ENCODE measurements at regions of chr3 and their contacts with region 1.

Region 1: DNA sequence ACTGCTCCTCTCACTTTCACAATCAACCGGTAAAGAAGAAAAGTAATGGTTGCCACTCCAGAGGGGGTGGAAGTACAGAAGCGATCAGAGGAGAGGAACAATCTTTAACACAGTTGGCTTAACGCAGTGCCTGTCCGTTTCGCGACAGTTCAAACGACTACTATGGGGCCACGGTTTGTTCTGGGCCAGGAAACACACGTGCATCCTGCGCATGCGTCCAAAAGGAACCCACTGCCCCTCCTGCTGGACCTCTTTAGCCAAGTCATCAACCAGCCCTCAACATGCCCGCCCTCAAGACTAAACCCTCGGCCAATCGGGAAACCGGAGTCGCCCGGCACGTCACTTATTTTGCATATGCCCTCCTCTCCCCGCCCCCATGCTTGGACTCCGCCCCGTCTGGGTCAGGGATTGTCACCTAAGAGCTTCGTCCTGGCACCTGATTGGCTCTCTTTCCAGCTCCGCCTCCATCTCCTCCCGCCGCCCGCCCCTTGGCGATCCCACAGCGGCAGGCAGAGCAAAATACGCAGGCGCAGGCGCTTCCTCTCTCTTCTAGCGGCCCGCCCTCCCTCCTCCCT is 345 bp upstream of the CDV3 start:
- DNase-seq: peak; percentile 100
- ATAC-seq: peak; percentile 89 to 91
- H3K4me3 ChIP-seq: peak overlapping the region; percentile 52 to 82 (median 63)
- H3K27ac ChIP-seq: peak overlapping the region; percentile 96 to 99 (median 98)
- H3K4me1 ChIP-seq: peaks cover 37% of the 10 kb centered on the region in 2 donors
- H3K27me3 ChIP-seq: no peaks in the 10 kb centered on the region
- CTCF ChIP-seq: no peak
- POLR2A ChIP-seq: peak in 1 of 2 donors; percentile 1

Region 2: DNA sequence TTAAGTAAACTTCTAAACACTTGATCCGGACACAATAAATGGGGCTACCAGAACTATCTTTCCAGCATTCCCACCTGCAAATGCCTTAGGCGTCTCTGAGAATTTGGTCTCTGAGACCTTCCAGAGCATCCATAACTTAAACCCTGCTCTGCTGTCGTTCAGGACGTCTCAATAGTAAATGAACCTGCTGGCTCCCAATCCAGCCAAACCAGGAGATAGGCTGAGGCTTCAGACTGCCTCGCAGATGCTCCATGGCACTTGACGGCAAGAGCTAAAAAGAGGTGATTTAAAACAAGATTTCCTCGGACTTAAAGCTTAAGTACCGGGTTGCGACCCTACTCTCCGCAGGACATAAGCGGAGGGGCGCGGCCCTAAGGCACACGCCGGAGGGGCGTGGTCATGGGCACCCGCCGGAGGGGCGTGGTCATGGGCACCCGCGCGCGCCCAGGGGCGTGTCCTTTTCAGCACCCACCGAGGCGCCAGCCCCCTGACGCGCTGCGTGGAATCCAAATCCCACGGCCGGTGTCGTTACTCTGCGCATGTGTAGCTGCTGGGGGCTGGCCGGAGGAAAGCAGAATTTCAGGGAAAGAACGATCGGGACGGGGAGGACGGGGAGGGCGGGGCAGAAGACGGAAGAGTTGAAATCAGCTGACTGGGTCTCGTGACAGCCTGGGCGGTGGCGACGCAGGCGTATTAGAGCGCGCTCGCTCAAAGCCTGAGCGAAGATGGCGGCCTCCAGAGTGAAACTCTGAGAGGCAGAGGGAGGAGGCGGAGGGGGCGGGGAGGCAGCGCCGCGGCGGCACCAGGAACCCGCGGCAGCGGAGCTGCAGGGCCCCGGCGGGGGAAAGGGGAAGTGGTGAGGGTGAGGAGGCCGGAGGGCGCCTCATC is 1156.1 kb before region 1 on chr3 and contains the start of gene DNAJC13:
- in situ Hi-C with region 1: no loop called
- intact Hi-C with region 1: loop called (anchors 5 kb)
- DNase-seq: peak; percentile 82 to 87
- ATAC-seq: peak; percentile 99
- H3K4me3 ChIP-seq: peak within 1 kb of the TSS; percentile 94 to 100 (median 98)
- H3K27ac ChIP-seq: peak within 1 kb of the TSS; percentile 88 to 95 (median 92)
- H3K4me1 ChIP-seq: peaks cover 16 to 21% of the 10 kb centered on the region in 2 donors
- H3K27me3 ChIP-seq: no peaks in the 10 kb centered on the region
- CTCF ChIP-seq: no peak
- POLR2A ChIP-seq: peak; percentile 53 to 61
- total RNA-seq, gene DNAJC13: 21.9 to 35.2 (median 26.5) TPM

Region 3: GRCh38 chr3:133040696-133041523 is 532.2 kb before region 1 on chr3:
- in situ Hi-C with region 1: no loop called
- intact Hi-C with region 1: loop called (anchors 2 kb)
- DNase-seq: peak; percentile 52 to 71
- ATAC-seq: peak; percentile 71 to 77
- H3K4me3 ChIP-seq: peak overlapping the region in 3 of 4 donors; percentile 9 to 26 (median 19)
- H3K27ac ChIP-seq: peak overlapping the region; percentile 50 to 68 (median 55)
- H3K4me1 ChIP-seq: peaks cover 10 to 27% of the 10 kb centered on the region in 2 donors
- H3K27me3 ChIP-seq: no peaks in the 10 kb centered on the region
- CTCF ChIP-seq: peak; percentile 59 to 82 (median 70)
- POLR2A ChIP-seq: no peak

Region 4: DNA sequence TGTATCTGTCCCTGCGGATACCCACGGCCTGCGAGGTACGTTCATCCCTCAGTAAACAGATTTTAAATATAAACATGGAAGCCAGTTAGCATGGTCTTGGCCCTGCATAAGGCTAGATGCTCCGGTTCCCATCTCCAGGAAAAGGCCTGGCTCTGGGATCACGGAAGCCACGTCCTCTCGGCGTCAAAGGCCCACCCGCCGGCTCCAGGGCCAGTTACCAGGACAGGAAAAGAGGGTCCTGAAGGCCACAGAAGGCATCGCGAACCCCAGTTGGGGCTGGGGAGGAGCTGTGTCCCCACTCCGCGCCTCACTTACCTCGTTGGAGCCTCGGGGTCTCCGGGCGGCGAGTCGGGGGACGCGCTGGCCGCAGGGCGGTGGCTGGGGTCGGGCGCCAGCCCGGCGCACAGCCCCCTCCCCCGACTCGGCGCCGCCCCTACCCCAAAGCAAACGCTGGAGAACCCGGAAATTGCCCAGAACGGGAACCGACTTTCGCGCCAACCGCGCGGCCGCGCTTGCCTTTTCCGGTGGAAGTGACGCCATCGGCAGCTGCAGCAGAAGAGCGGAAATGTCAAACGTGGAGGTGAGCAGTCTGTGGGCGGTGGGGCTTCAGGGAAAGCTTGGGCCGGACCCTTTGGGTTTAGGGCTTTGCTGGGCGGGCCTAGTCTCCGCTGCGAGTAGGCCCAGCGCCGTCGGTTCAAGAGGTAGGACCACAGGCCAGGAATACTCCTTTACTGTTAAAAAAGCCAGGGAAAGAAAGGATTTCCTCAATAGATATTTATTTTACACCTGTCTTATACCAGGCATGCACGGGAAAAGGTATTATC is 88.5 kb after region 1 on chr3 and contains the start of gene TOPBP1:
- in situ Hi-C with region 1: no loop called
- intact Hi-C with region 1: loop called (anchors 5 kb)
- DNase-seq: peak; percentile 50 to 52
- ATAC-seq: peak; percentile 81 to 88
- H3K4me3 ChIP-seq: peak within 1 kb of the TSS; percentile 73 to 84 (median 80)
- H3K27ac ChIP-seq: peak within 1 kb of the TSS; percentile 70 to 78 (median 74)
- H3K4me1 ChIP-seq: peaks cover 11 to 22% of the 10 kb centered on the region in 2 donors
- H3K27me3 ChIP-seq: no peaks in the 10 kb centered on the region
- CTCF ChIP-seq: no peak
- POLR2A ChIP-seq: no peak
- total RNA-seq, gene TOPBP1: 11.8 to 21.1 (median 16.9) TPM

Region 5: GRCh38 chr3:134250717-134251220 is 677.6 kb after region 1 on chr3 and contains the start of gene RYK:
- in situ Hi-C with region 1: no loop called
- intact Hi-C with region 1: loop called (anchors 10 kb)
- DNase-seq: peak; percentile 55 to 75
- ATAC-seq: peak; percentile 91 to 95
- H3K4me3 ChIP-seq: peak within 1 kb of the TSS; percentile 73 to 99 (median 86)
- H3K27ac ChIP-seq: peak within 1 kb of the TSS; percentile 83 to 96 (median 95)
- H3K4me1 ChIP-seq: peaks cover 10 to 12% of the 10 kb centered on the region in 2 donors
- H3K27me3 ChIP-seq: no peaks in the 10 kb centered on the region
- CTCF ChIP-seq: no peak
- POLR2A ChIP-seq: peak; percentile 65 to 79
- total RNA-seq, gene RYK: 25.8 to 42.4 (median 35.0) TPM

Region 6: DNA sequence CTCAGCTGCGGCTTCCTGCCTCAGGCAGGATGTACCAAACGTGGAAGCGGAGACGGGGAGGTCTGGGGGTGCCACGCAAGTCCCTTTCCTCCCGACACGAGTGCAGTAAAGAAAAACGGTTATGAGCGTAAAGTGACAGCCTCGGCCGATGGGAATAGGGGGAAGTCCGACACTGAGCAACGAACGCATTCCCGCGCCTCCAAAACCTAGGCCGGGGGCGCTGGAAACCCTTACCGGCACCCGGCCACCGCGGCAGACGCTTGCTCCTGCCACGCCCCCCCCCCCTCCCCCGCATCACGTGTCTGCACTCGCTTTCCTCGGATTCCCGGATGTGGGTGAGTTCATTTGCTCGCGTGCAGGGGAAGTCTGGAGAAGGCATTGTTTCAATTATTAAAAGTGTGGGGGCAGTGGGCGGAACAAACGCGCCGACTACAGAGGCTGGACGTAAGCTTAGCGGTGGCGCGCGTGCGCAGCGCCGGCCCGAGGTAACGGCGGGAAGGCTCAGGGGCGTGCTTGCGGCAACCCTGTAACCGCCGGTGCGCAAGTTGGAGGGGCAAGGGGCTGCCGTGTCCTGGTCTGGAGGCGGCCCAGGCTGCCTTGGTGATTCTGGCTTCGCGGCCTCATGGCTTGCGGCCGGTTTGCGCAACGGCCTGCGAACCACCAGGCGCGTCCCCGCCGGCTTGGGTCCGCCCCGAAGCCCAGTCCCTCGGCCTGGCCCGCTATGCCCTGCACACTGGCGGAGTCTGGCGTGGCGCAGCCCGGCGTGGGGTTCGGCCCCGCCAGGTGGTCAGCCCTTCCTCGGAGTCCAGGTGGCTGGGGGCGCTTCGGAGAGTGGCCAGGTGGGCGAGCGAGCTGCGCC is 912.8 kb after region 1 on chr3 and contains the starts of genes ANAPC13 and CEP63:
- in situ Hi-C with region 1: no loop called
- intact Hi-C with region 1: loop called (anchors 5 kb)
- DNase-seq: peak; percentile 90 to 95
- ATAC-seq: peak; percentile 92 to 93
- H3K4me3 ChIP-seq: peak within 1 kb of the TSS; percentile 68 to 99 (median 90)
- H3K27ac ChIP-seq: peak within 1 kb of the TSS; percentile 93 to 99 (median 97)
- H3K4me1 ChIP-seq: peaks cover 35% of the 10 kb centered on the region in 2 donors
- H3K27me3 ChIP-seq: no peaks in the 10 kb centered on the region
- CTCF ChIP-seq: no peak
- POLR2A ChIP-seq: peak; percentile 65 to 72
- total RNA-seq, gene ANAPC13: 32.3 to 82.2 (median 78.7) TPM
- total RNA-seq, gene CEP63: 21.4 to 23.5 (median 22.4) TPM